ENCODE measurements at regions of chr1 and their contacts with region 1.

Region 1: GRCh38 chr1:26417111-26417759 is 6.6 kb downstream of the LIN28A start:
- DNase-seq: peak; percentile 76 to 81 (median 78)
- H3K4me3 ChIP-seq: no peak overlapping the region
- H3K4me3 Mint-ChIP-seq: no peak overlapping the region
- H3K27ac ChIP-seq: no peak overlapping the region
- H3K27ac Mint-ChIP-seq: no peak overlapping the region
- H3K4me1 ChIP-seq: no peaks in the 10 kb centered on the region
- H3K4me1 Mint-ChIP-seq: peaks cover 0 to 3% (median 0%) of the 10 kb centered on the region in 4 donors
- H3K27me3 ChIP-seq: peaks cover 19% of the 10 kb centered on the region
- H3K27me3 Mint-ChIP-seq: peaks cover 12 to 23% of the 10 kb centered on the region in 2 donors

Region 2: GRCh38 chr1:26169669-26170471 is 247.4 kb before region 1 on chr1 and contains the start of gene ZNF593:
- CTCF ChIA-PET with region 1: interaction called, 23 read pairs
- POLR2A ChIA-PET with region 1: interaction called, 4 read pairs
- intact Hi-C with region 1: no loop called
- DNase-seq: peak; percentile 74 to 81 (median 77)
- H3K4me3 ChIP-seq: peak within 1 kb of the TSS; percentile 52 to 90
- H3K4me3 Mint-ChIP-seq: peak within 1 kb of the TSS; percentile 83 to 91 (median 88)
- H3K27ac ChIP-seq: peak within 1 kb of the TSS; percentile 85
- H3K27ac Mint-ChIP-seq: peak within 1 kb of the TSS; percentile 71 to 94 (median 93)
- H3K4me1 ChIP-seq: peaks cover 20% of the 10 kb centered on the region
- H3K4me1 Mint-ChIP-seq: peaks cover 4 to 25% (median 16%) of the 10 kb centered on the region in 4 donors
- H3K27me3 ChIP-seq: no peaks in the 10 kb centered on the region
- H3K27me3 Mint-ChIP-seq: no peaks in the 10 kb centered on the region
- total RNA-seq, gene ZNF593: 10.7 to 12.4 TPM

Region 3: GRCh38 chr1:26279456-26280332 is 137.5 kb before region 1 on chr1 and contains the start of gene SH3BGRL3:
- CTCF ChIA-PET with region 1: interaction called, 66 read pairs
- POLR2A ChIA-PET with region 1: interaction called, 10 read pairs
- intact Hi-C with region 1: loop called (anchors 1 kb)
- DNase-seq: peak; percentile 83 to 88 (median 86)
- H3K4me3 ChIP-seq: peak within 1 kb of the TSS; percentile 50 to 92
- H3K4me3 Mint-ChIP-seq: peak within 1 kb of the TSS; percentile 85 to 96 (median 90)
- H3K27ac ChIP-seq: peak within 1 kb of the TSS; percentile 82
- H3K27ac Mint-ChIP-seq: peak within 1 kb of the TSS; percentile 94 to 98 (median 97)
- H3K4me1 ChIP-seq: peaks cover 88% of the 10 kb centered on the region
- H3K4me1 Mint-ChIP-seq: peaks cover 58 to 90% (median 76%) of the 10 kb centered on the region in 4 donors
- H3K27me3 ChIP-seq: no peaks in the 10 kb centered on the region
- H3K27me3 Mint-ChIP-seq: no peaks in the 10 kb centered on the region
- total RNA-seq, gene SH3BGRL3: 293 to 305 TPM

Region 4: GRCh38 chr1:26349188-26349876 is 67.9 kb before region 1 on chr1:
- CTCF ChIA-PET with region 1: interaction called, 10 read pairs
- POLR2A ChIA-PET with region 1: no interaction called
- intact Hi-C with region 1: no loop called
- DNase-seq: no peak
- H3K4me3 ChIP-seq: no peak overlapping the region
- H3K4me3 Mint-ChIP-seq: no peak overlapping the region
- H3K27ac ChIP-seq: no peak overlapping the region
- H3K27ac Mint-ChIP-seq: no peak overlapping the region
- H3K4me1 ChIP-seq: no peaks in the 10 kb centered on the region
- H3K4me1 Mint-ChIP-seq: peaks cover 0 to 3% (median under 1%) of the 10 kb centered on the region in 4 donors
- H3K27me3 ChIP-seq: no peaks in the 10 kb centered on the region
- H3K27me3 Mint-ChIP-seq: no peaks in the 10 kb centered on the region

Region 5: DNA sequence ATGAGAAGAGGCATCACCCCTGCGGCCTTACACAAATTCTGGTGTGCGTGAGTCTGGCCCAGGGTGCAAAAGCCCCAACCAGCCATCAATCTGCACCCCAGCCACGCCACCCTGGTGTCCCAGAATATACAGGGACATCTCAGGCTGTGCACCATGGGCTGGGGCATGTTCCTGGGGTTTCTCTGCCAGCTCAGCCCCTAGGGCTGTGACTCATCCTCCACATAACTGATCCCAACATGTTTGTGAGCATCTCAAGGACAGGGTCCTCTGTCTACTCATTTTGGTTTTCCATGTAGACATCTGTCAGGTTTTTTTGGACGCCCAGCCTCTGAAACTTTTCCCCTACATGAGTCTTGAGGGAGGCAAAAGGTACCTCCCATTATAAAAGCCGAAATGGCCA is 45.2 kb before region 1 on chr1:
- CTCF ChIA-PET with region 1: interaction called, 21 read pairs
- POLR2A ChIA-PET with region 1: interaction called, 3 read pairs
- intact Hi-C with region 1: no loop called
- DNase-seq: no peak
- H3K4me3 ChIP-seq: peak overlapping the region in 1 of 2 donors; percentile 18
- H3K4me3 Mint-ChIP-seq: peak overlapping the region in 7 of 8 donors; percentile 8 to 81 (median 61)
- H3K27ac ChIP-seq: no peak overlapping the region
- H3K27ac Mint-ChIP-seq: peak overlapping the region; percentile 75 to 96 (median 86)
- H3K4me1 ChIP-seq: peaks cover 94% of the 10 kb centered on the region
- H3K4me1 Mint-ChIP-seq: peaks cover 60 to 86% (median 73%) of the 10 kb centered on the region in 4 donors
- H3K27me3 ChIP-seq: no peaks in the 10 kb centered on the region
- H3K27me3 Mint-ChIP-seq: no peaks in the 10 kb centered on the region

Region 6: DNA sequence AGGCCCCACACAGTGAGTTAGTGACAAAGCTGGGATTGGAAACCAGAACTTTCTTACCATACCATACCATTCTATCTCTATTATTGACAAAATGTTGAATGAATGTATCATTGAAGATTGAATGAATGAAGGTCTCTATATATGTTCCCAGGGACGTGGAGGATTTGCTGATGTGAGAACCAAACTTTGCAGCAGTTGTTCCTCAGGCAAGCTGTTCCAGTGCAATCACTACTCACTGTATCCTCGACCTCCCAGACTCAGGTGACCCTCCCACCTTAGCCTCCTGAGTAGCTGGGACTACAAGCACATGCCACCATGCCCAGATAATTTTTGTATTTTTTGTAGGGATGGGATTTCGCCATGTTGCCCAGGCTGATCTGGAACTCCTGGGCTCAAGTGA is 18.2 kb before region 1 on chr1:
- CTCF ChIA-PET with region 1: interaction called, 35 read pairs
- POLR2A ChIA-PET with region 1: no interaction called
- intact Hi-C with region 1: no loop called
- DNase-seq: no peak
- H3K4me3 ChIP-seq: no peak overlapping the region
- H3K4me3 Mint-ChIP-seq: no peak overlapping the region
- H3K27ac ChIP-seq: no peak overlapping the region
- H3K27ac Mint-ChIP-seq: no peak overlapping the region
- H3K4me1 ChIP-seq: no peaks in the 10 kb centered on the region
- H3K4me1 Mint-ChIP-seq: peaks cover 3 to 6% (median 5%) of the 10 kb centered on the region in 4 donors
- H3K27me3 ChIP-seq: no peaks in the 10 kb centered on the region
- H3K27me3 Mint-ChIP-seq: peaks cover 8 to 9% of the 10 kb centered on the region in 2 donors

Measured in CD4-positive, alpha-beta memory T cell (primary cell).